CD8-positive, alpha-beta T cell (primary cell): ENCODE measurements at regions of chr11 and their contacts with region 1.

Region 1: DNA sequence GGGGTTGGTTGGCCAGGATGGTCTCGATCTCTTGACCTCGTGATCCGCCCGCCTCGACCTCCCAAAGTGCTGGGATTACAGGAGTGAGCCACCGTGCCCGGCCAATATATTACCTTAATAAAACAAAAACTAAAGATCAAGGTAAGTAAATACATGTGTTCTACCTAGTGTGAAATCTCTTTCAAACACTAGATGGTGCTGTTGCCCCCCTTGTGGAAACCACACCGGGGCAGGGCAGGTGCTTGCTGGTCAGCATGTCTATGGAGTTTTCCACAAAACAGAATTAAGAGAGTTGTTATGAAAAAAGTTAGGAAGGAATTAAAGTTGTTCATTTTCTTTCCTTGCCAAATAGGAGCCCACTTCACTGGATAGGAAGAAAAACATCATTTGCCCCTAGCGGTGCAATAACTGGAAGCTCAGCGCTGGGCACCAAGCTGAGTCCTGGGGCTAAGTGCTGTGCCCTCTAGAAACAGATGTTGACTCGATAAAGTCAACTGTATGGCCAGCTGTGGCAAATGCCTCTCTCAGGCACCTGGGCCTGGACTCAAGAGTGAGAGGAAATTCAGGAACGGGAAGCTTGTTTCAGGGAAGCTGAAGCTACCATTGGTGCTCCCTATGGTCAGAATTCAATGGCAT is 6.3 kb upstream of the KCNJ5 start:
- DNase-seq: peak in 7 of 9 experiments; percentile 35 to 78 (median 57)
- ATAC-seq: peak; percentile 55
- H3K4me3 ChIP-seq: no peak overlapping the region
- H3K4me3 Mint-ChIP-seq: no peak overlapping the region
- H3K27ac ChIP-seq: no peak overlapping the region
- H3K27ac Mint-ChIP-seq: no peak overlapping the region
- H3K4me1 ChIP-seq: no peaks in the 10 kb centered on the region
- H3K4me1 Mint-ChIP-seq: peaks cover 1% of the 10 kb centered on the region
- H3K27me3 ChIP-seq: peaks cover 6 to 10% of the 10 kb centered on the region in 2 experiments
- H3K27me3 Mint-ChIP-seq: peaks cover 67% of the 10 kb centered on the region
- CTCF ChIP-seq: peak; percentile 93

Region 2: GRCh38 chr11:128874427-128874826 is 10.4 kb before region 1 on chr11:
- CTCF ChIA-PET with region 1: interaction called, 23 read pairs
- POLR2A ChIA-PET with region 1: no interaction called
- intact Hi-C with region 1: no loop called
- DNase-seq: no peak
- ATAC-seq: no peak
- H3K4me3 ChIP-seq: no peak overlapping the region
- H3K4me3 Mint-ChIP-seq: no peak overlapping the region
- H3K27ac ChIP-seq: no peak overlapping the region
- H3K27ac Mint-ChIP-seq: no peak overlapping the region
- H3K4me1 ChIP-seq: no peaks in the 10 kb centered on the region
- H3K4me1 Mint-ChIP-seq: peaks cover 3% of the 10 kb centered on the region
- H3K27me3 ChIP-seq: no peaks in the 10 kb centered on the region
- H3K27me3 Mint-ChIP-seq: peaks cover 10% of the 10 kb centered on the region
- CTCF ChIP-seq: no peak

Region 3: GRCh38 chr11:128936606-128937251 is 51.9 kb after region 1 on chr11:
- CTCF ChIA-PET with region 1: interaction called, 13 read pairs
- POLR2A ChIA-PET with region 1: no interaction called
- intact Hi-C with region 1: no loop called
- DNase-seq: no peak
- ATAC-seq: no peak
- H3K4me3 ChIP-seq: no peak overlapping the region
- H3K4me3 Mint-ChIP-seq: no peak overlapping the region
- H3K27ac ChIP-seq: no peak overlapping the region
- H3K27ac Mint-ChIP-seq: no peak overlapping the region
- H3K4me1 ChIP-seq: no peaks in the 10 kb centered on the region
- H3K4me1 Mint-ChIP-seq: no peaks in the 10 kb centered on the region
- H3K27me3 ChIP-seq: no peaks in the 10 kb centered on the region
- H3K27me3 Mint-ChIP-seq: peaks cover 2% of the 10 kb centered on the region
- CTCF ChIP-seq: no peak

Region 4: DNA sequence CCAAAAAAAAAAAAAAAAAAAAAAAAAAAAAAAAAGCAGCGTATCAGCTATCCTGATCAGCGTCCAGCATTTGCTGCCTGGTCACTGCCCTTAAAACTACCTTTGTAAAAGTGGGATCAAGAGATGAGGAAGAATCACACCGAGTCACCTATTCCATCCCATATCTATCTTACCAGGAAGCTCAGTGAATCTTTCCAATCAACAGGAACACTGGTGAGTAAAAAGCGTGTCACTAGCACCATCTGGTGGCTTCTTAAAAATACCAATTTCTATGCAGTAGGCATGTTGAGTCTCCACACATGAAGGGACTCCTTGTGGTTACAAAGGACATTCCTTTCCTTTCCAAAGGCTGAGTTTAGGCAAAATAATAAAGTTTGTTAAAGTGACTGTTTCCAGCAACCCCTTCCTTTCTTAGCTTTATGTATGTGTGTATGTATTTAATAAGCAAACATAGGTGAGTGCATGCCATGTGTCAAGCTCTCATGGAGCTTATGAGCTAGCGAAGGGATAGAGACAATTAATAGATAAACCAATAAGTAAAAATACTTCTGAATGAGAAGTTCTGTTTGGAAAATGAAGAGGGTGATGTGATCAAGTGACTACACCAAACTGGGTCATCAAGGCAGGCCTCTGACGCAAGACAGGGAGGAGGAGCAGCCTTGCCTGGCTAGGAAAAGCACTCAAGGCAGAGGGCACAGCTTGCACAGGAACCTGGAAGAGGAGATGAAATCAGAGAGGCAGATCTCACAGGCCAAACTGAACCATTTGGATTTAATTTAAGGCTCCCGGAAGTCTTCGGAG is 71.8 kb after region 1 on chr11:
- CTCF ChIA-PET with region 1: interaction called, 222 read pairs
- POLR2A ChIA-PET with region 1: interaction called, 3 read pairs
- intact Hi-C with region 1: loop called in 1 of 2 experiments (anchors 1 kb)
- DNase-seq: peak in 3 of 9 experiments; percentile 12 to 66 (median 59)
- ATAC-seq: no peak
- H3K4me3 ChIP-seq: no peak overlapping the region
- H3K4me3 Mint-ChIP-seq: no peak overlapping the region
- H3K27ac ChIP-seq: no peak overlapping the region
- H3K27ac Mint-ChIP-seq: no peak overlapping the region
- H3K4me1 ChIP-seq: no peaks in the 10 kb centered on the region
- H3K4me1 Mint-ChIP-seq: peaks cover 2% of the 10 kb centered on the region
- H3K27me3 ChIP-seq: no peaks in the 10 kb centered on the region
- H3K27me3 Mint-ChIP-seq: peaks cover 8% of the 10 kb centered on the region
- CTCF ChIP-seq: peak; percentile 70

Region 5: GRCh38 chr11:129750349-129751292 is 865.8 kb after region 1 on chr11:
- CTCF ChIA-PET with region 1: interaction called, 3 read pairs
- POLR2A ChIA-PET with region 1: no interaction called
- intact Hi-C with region 1: loop called in 1 of 2 experiments (anchors 2 kb)
- DNase-seq: peak; percentile 59 to 88 (median 77)
- ATAC-seq: peak; percentile 93
- H3K4me3 ChIP-seq: peak overlapping the region; percentile 19 to 36
- H3K4me3 Mint-ChIP-seq: peak overlapping the region; percentile 53
- H3K27ac ChIP-seq: no peak overlapping the region
- H3K27ac Mint-ChIP-seq: no peak overlapping the region
- H3K4me1 ChIP-seq: peaks cover 5% of the 10 kb centered on the region
- H3K4me1 Mint-ChIP-seq: peaks cover 4% of the 10 kb centered on the region
- H3K27me3 ChIP-seq: no peaks in the 10 kb centered on the region
- H3K27me3 Mint-ChIP-seq: peaks cover 7% of the 10 kb centered on the region
- CTCF ChIP-seq: peak; percentile 100

Region 6: GRCh38 chr11:130413405-130414106 is 1528.7 kb after region 1 on chr11:
- CTCF ChIA-PET with region 1: no interaction called
- POLR2A ChIA-PET with region 1: no interaction called
- intact Hi-C with region 1: no loop called
- DNase-seq: no peak
- ATAC-seq: no peak
- H3K4me3 ChIP-seq: no peak overlapping the region
- H3K4me3 Mint-ChIP-seq: no peak overlapping the region
- H3K27ac ChIP-seq: no peak overlapping the region
- H3K27ac Mint-ChIP-seq: no peak overlapping the region
- H3K4me1 ChIP-seq: no peaks in the 10 kb centered on the region
- H3K4me1 Mint-ChIP-seq: no peaks in the 10 kb centered on the region
- H3K27me3 ChIP-seq: no peaks in the 10 kb centered on the region
- H3K27me3 Mint-ChIP-seq: peaks cover 20% of the 10 kb centered on the region
- CTCF ChIP-seq: no peak